ENCODE measurements at regions of chr17 and their contacts with region 1.

Region 1: DNA sequence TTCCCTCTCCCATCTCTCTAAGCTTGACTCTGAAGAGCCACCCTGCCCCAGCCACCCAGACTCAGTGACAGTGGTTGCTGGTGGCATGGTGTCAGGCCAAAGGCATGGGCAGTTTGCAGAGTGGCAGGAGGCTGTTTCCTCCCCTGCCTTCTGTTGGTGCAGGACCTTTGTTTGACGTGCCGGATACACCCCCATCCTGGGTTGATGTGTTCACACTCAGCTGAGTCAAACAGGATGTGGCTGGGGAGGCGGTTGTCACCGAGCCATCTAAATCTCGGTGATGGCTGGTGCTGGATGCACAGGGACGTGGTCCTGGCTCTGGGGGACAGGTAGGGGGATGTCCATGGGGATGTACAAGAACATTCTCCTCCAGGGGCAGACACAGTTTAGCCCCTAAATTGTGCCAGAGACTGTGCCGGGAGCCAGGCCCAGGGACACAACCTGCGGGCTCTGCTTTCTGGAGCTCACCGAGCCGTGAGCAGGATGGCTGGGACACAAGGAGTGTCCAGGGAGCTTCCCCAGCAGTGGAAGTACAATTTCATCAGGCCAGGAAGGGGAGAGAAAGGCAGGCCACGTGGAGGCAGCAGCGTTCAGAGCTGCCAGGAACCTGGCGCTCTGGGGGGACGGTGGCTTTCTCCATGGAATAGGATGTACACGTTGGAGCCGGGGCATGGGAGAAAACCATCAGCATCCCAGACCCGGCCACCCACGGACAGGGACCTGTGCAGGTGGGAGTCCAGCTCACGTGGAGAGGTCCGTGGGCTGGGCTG is 264.2 kb downstream of the SEC14L1 start:
- DNase-seq: peak; percentile 94
- H3K4me3 Mint-ChIP-seq: peak overlapping the region; percentile 94
- H3K27ac Mint-ChIP-seq: peak overlapping the region; percentile 91
- H3K4me1 Mint-ChIP-seq: peaks cover 88% of the 10 kb centered on the region
- H3K27me3 Mint-ChIP-seq: no peaks in the 10 kb centered on the region

Region 2: GRCh38 chr17:77325577-77326075 is 79.4 kb before region 1 on chr17:
- CTCF ChIA-PET with region 1: interaction called, 65 read pairs
- POLR2A ChIA-PET with region 1: interaction called, 6 read pairs
- intact Hi-C with region 1: no loop called
- DNase-seq: peak; percentile 41
- H3K4me3 Mint-ChIP-seq: peak overlapping the region; percentile 33
- H3K27ac Mint-ChIP-seq: peak overlapping the region; percentile 90
- H3K4me1 Mint-ChIP-seq: peaks cover 40% of the 10 kb centered on the region
- H3K27me3 Mint-ChIP-seq: no peaks in the 10 kb centered on the region

Region 3: DNA sequence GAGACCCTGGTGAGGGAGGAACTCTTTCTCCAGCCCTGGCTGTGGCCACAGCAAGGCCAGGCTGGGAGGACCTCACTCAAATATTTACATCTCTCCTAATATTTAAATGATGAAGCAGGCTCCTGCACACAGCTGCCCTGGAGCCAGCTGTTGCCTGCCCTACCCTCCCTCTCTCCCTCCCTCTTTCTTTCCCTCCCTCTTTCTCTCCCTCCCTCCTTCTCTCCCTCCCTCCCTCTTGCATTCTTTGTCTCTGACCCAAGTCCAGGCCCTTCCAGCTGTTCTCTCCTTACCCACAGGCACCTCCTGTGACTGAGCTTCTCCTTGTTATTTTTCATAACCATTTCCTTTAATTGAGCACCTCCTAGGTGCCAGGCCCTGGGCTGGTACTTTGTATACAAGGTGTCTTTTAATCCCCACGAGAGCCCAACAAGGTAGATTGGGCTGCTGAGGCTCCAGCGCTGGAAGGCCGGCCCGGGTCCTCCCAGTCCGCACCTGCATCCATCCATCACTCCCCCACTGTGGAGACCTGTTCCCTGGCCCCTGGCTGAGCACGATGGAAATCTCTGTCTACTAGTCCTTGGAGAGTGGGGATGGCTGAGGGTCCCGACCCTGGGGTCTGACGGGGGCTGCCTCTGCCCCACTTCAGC is 21.9 kb before region 1 on chr17:
- CTCF ChIA-PET with region 1: interaction called, 77 read pairs
- POLR2A ChIA-PET with region 1: interaction called, 3 read pairs
- intact Hi-C with region 1: no loop called
- DNase-seq: no peak
- H3K4me3 Mint-ChIP-seq: no peak overlapping the region
- H3K27ac Mint-ChIP-seq: peak overlapping the region; percentile 67
- H3K4me1 Mint-ChIP-seq: peaks cover 80% of the 10 kb centered on the region
- H3K27me3 Mint-ChIP-seq: no peaks in the 10 kb centered on the region

Region 4: DNA sequence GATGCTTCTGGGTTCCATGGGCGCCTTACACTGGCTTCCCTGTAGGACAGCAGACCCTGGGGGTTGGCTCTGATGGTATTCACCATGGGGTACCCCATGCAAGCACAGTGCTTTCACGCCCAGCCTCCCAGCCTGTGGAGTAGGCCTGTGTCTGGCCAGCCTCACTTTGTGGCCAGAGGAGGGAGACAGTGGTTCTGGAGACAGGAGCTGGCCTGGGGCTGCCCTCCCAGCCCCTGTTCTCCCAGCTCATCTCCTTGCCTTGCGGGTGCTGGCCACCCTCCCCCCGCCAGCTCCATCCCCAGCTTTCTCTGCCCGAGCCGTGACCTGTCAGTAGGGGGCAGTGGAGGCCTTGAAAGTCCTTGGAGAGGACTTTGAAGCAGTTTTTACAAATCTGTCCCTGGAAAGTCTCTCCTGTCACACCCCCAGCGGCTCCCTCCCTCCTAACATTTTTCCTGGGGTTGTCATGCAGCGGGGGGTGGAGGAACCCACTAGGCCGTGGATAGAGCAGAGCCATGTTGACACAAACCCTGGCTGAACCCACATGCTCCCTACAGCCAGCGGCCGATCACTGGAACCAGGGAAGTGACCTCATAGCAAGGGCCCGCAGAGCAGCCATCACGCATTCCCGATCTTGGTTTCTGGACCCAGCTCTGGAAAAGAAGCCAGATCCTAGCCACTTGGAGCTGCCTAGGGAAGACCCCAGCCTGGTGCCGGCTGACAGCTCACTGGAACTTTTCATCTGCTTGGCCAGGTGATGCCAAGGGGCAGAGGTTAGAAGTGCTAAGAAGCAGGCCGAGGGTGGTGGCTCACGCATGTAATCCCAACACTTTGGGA is 25.1 kb after region 1 on chr17:
- CTCF ChIA-PET with region 1: interaction called, 140 read pairs
- POLR2A ChIA-PET with region 1: interaction called, 6 read pairs
- intact Hi-C with region 1: no loop called
- DNase-seq: peak; percentile 90
- H3K4me3 Mint-ChIP-seq: no peak overlapping the region
- H3K27ac Mint-ChIP-seq: no peak overlapping the region
- H3K4me1 Mint-ChIP-seq: peaks cover 83% of the 10 kb centered on the region
- H3K27me3 Mint-ChIP-seq: no peaks in the 10 kb centered on the region

Region 5: GRCh38 chr17:77456951-77457548 is 52.1 kb after region 1 on chr17:
- CTCF ChIA-PET with region 1: interaction called, 29 read pairs
- POLR2A ChIA-PET with region 1: interaction called, 13 read pairs
- intact Hi-C with region 1: loop called (anchors 2 kb)
- DNase-seq: peak; percentile 65
- H3K4me3 Mint-ChIP-seq: peak overlapping the region; percentile 91
- H3K27ac Mint-ChIP-seq: peak overlapping the region; percentile 100
- H3K4me1 Mint-ChIP-seq: peaks cover 51% of the 10 kb centered on the region
- H3K27me3 Mint-ChIP-seq: no peaks in the 10 kb centered on the region

Region 6: DNA sequence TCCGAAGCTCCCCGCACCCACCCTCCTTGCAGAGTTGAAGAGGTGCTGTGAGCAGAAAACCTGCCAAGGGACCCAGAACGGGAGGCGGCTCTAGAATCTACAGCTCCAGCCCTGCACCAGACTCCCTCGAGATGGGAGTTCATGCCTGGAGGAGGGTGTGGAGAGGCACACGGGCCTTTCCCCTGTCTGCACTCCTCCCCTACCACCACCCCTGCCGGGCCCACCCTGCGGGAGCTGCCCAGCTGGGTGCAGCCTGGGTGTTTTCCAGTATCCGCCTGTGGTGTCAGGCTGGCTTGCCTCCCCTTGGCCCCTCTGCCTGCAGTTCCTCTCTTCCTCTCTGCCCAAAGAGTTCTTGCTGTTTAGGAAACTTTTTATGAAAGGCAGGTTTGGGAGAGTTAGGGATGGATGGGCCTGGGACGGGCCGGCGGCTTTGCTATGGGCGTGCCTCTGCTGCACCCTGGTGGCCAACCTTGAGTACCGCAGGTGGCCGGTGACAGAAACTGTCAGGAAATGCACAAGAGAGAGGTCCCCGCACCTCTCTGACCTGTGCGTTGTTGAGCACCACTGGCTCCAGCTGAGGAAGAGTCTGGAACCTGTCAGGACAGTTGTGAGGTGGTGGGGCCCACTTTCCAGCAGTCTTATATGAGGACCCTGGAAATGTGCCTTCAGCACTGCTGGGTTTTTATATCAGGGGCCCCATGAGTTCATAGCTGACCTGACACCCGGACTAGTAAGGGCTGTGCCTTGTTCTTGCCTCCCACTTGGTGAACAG is 89.9 kb after region 1 on chr17:
- CTCF ChIA-PET with region 1: interaction called, 88 read pairs
- POLR2A ChIA-PET with region 1: interaction called, 3 read pairs
- intact Hi-C with region 1: loop called (anchors 1 kb)
- DNase-seq: peak; percentile 82
- H3K4me3 Mint-ChIP-seq: peak overlapping the region; percentile 4
- H3K27ac Mint-ChIP-seq: peak overlapping the region; percentile 75
- H3K4me1 Mint-ChIP-seq: peaks cover 13% of the 10 kb centered on the region
- H3K27me3 Mint-ChIP-seq: no peaks in the 10 kb centered on the region

Region 7: GRCh38 chr17:77548967-77549366 is 144.0 kb after region 1 on chr17:
- CTCF ChIA-PET with region 1: no interaction called
- POLR2A ChIA-PET with region 1: no interaction called
- intact Hi-C with region 1: no loop called
- DNase-seq: no peak
- H3K4me3 Mint-ChIP-seq: no peak overlapping the region
- H3K27ac Mint-ChIP-seq: no peak overlapping the region
- H3K4me1 Mint-ChIP-seq: no peaks in the 10 kb centered on the region
- H3K27me3 Mint-ChIP-seq: no peaks in the 10 kb centered on the region

Measured in activated CD4-positive, alpha-beta memory T cell treated with anti-CD3 and anti-CD28 coated beads for 36 hours (primary cell).